Mammary epithelial cell (primary cell): ENCODE measurements at regions of chr7 and their contacts with region 1.

Region 1: GRCh38 chr7:68334636-68335272 is 1263.5 kb upstream of the AUTS2 start:
- DNase-seq: no peak
- H3K4me3 ChIP-seq: no peak overlapping the region
- H3K27ac ChIP-seq: no peak overlapping the region
- H3K4me1 ChIP-seq: no peaks in the 10 kb centered on the region
- H3K27me3 ChIP-seq: no peaks in the 10 kb centered on the region
- CTCF ChIP-seq: no peak

Region 2: GRCh38 chr7:68009716-68010115 is 325.0 kb before region 1 on chr7:
- CTCF ChIA-PET with region 1: no interaction called
- dilution Hi-C with region 1: no loop called
- in situ Hi-C with region 1: no loop called
- intact Hi-C with region 1: no loop called
- DNase-seq: no peak
- H3K4me3 ChIP-seq: no peak overlapping the region
- H3K27ac ChIP-seq: no peak overlapping the region
- H3K4me1 ChIP-seq: no peaks in the 10 kb centered on the region
- H3K27me3 ChIP-seq: no peaks in the 10 kb centered on the region
- CTCF ChIP-seq: no peak

Region 3: GRCh38 chr7:68038621-68039314 is 296.0 kb before region 1 on chr7:
- CTCF ChIA-PET with region 1: no interaction called
- dilution Hi-C with region 1: no loop called
- in situ Hi-C with region 1: no loop called
- intact Hi-C with region 1: no loop called
- DNase-seq: no peak
- H3K4me3 ChIP-seq: no peak overlapping the region
- H3K27ac ChIP-seq: no peak overlapping the region
- H3K4me1 ChIP-seq: no peaks in the 10 kb centered on the region
- H3K27me3 ChIP-seq: no peaks in the 10 kb centered on the region
- CTCF ChIP-seq: no peak

Region 4: GRCh38 chr7:68176974-68177373 is 157.8 kb before region 1 on chr7:
- CTCF ChIA-PET with region 1: interaction called, 10 read pairs
- dilution Hi-C with region 1: no loop called
- in situ Hi-C with region 1: no loop called
- intact Hi-C with region 1: no loop called
- DNase-seq: peak; percentile 2
- H3K4me3 ChIP-seq: no peak overlapping the region
- H3K27ac ChIP-seq: no peak overlapping the region
- H3K4me1 ChIP-seq: no peaks in the 10 kb centered on the region
- H3K27me3 ChIP-seq: no peaks in the 10 kb centered on the region
- CTCF ChIP-seq: peak; percentile 6 to 15

Region 5: DNA sequence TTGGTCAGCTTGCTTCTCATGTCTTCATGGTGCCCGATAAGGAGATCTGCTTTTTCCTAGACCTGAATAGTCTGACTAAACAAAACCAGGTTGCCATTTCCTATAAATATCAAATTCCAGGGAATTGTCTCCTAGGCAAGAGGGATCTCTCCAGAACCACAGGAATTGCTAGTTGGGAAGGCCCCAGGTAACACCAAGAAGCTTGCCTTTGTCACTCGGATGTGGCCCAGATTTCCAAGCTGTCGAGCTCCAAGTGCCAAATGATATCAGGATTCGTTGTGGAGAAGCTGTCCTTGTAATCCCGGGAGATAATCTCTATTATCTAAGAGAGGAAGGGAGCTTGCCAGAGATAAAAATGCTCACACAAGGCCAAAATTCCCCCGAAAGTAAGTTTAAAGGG is 24.9 kb before region 1 on chr7:
- CTCF ChIA-PET with region 1: no interaction called
- dilution Hi-C with region 1: no loop called
- in situ Hi-C with region 1: no loop called
- intact Hi-C with region 1: no loop called
- DNase-seq: no peak
- H3K4me3 ChIP-seq: no peak overlapping the region
- H3K27ac ChIP-seq: no peak overlapping the region
- H3K4me1 ChIP-seq: no peaks in the 10 kb centered on the region
- H3K27me3 ChIP-seq: no peaks in the 10 kb centered on the region
- CTCF ChIP-seq: no peak